ENCODE measurements at regions of chr16 and their contacts with region 1.

Region 1: DNA sequence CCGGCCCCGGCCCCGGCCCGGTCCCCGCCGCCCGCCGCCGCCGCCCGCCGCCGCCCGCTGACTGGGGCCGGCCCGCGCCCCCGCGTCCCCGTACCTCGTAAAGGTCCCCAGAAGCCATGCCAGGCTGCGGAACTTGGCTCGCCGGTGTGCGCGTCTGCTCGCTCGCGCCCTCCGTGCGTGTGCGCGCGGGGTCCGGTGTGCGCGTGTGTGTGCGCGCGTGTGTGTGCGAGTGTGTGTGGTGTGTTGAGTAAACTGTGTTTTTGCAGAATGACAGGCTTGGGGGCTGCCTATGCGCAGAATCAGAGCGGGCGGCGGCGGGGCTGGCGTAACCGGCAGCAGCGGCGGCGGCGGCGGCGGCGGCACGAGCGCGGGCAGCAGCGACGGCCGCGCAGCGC is 345 bp downstream of the CDYL2 start:
- DNase-seq: peak; percentile 75
- H3K4me3 Mint-ChIP-seq: peak overlapping the region; percentile 96
- H3K27ac Mint-ChIP-seq: peak overlapping the region; percentile 89
- H3K4me1 Mint-ChIP-seq: peaks cover 57% of the 10 kb centered on the region
- H3K27me3 Mint-ChIP-seq: peaks cover 2% of the 10 kb centered on the region

Region 2: DNA sequence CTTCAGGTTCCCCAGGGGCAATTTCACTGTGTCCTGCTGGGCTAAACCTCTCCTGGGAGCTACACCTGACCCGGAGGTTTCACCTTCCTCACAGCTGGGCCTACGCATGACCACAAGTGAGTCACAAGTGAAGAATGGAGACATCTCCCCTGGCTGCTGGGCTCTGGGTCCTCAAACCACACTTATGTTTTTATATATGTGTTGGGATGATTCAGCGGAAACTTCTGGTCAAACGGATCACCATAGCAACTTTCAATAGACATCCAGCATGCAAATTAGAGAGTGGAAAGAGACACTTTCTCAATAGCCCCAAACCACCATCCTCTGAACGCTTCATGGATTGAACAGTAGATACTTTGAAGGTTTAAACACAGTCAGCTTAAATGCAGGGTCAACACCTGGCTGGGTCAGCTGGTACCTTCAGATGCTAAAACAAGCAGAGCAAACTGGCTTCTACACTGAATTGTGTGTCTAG is 1175.5 kb before region 1 on chr16:
- CTCF ChIA-PET with region 1: no interaction called
- POLR2A ChIA-PET with region 1: no interaction called
- intact Hi-C with region 1: loop called (anchors 10 kb)
- DNase-seq: peak; percentile 91
- H3K4me3 Mint-ChIP-seq: no peak overlapping the region
- H3K27ac Mint-ChIP-seq: peak overlapping the region; percentile 76
- H3K4me1 Mint-ChIP-seq: peaks cover 41% of the 10 kb centered on the region
- H3K27me3 Mint-ChIP-seq: peaks cover 30% of the 10 kb centered on the region

Region 3: DNA sequence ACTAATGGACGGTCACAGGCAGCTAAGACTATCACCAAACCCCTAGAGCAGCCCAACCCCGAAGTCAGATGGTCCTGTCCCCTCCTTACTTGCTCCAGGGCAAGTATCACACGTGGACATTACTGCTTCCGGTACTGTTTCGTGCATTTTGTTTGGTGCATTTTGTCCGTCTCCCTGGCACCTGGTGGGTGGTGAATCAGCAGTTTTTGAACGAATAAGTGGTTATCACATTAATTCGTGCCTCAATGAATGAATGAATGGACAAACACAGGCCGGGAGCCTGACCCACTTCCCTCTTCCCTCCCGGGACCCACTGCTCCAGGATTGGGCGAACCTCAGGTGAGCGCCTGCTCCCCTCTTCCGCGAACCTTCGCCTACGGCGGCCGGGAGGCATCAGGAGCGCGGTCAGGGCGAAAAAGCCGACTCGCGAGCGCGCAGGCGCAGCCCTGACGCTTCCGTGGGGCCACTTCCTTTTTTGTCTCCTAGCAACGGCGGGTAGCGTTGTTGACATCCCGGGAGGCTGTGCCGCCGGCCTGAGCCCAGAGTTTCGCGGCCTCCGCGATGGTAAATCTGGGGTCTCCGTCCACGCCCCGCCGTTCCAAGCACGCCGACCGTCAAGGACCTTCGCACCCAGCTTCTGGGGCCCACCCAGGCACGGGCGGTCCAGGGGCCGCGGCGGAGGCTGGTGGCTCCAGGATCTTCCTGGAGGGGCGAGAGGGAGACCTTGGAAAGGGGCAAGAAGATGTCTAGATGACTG is 263.4 kb before region 1 on chr16 and contains the start of gene DYNLRB2:
- CTCF ChIA-PET with region 1: no interaction called
- POLR2A ChIA-PET with region 1: no interaction called
- intact Hi-C with region 1: loop called (anchors 1 kb)
- DNase-seq: peak; percentile 96
- H3K4me3 Mint-ChIP-seq: peak within 1 kb of the TSS; percentile 95
- H3K27ac Mint-ChIP-seq: peak within 1 kb of the TSS; percentile 94
- H3K4me1 Mint-ChIP-seq: peaks cover 26% of the 10 kb centered on the region
- H3K27me3 Mint-ChIP-seq: no peaks in the 10 kb centered on the region
- total RNA-seq, gene DYNLRB2: not detected

Region 4: DNA sequence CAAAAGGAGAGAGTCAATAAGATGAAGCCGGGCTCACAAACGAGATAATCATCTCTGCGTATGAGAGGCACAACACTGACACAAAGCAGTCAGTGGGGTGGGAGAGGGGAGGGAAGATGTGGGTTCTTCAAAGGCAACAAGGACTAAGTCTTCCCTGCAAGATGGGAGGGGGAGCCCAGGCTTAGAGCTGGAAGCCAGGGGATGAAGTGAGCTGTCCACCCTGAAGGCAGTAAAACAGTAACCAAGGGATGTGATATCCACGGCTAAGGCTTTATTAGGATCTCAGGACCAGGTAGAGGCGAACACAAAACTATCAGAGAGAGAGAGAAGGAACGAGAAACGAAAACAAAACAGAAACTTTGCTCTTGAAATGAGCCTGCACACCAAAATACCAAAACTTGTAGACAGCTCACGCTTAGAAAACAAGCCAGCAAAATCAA is 147.3 kb before region 1 on chr16:
- CTCF ChIA-PET with region 1: no interaction called
- POLR2A ChIA-PET with region 1: no interaction called
- intact Hi-C with region 1: loop called (anchors 2 kb)
- DNase-seq: peak; percentile 62
- H3K4me3 Mint-ChIP-seq: peak overlapping the region; percentile 73
- H3K27ac Mint-ChIP-seq: peak overlapping the region; percentile 76
- H3K4me1 Mint-ChIP-seq: peaks cover 29% of the 10 kb centered on the region
- H3K27me3 Mint-ChIP-seq: no peaks in the 10 kb centered on the region

Region 5: GRCh38 chr16:80671281-80671849 is 132.7 kb before region 1 on chr16:
- CTCF ChIA-PET with region 1: no interaction called
- POLR2A ChIA-PET with region 1: no interaction called
- intact Hi-C with region 1: no loop called
- DNase-seq: no peak
- H3K4me3 Mint-ChIP-seq: no peak overlapping the region
- H3K27ac Mint-ChIP-seq: no peak overlapping the region
- H3K4me1 Mint-ChIP-seq: peaks cover 35% of the 10 kb centered on the region
- H3K27me3 Mint-ChIP-seq: no peaks in the 10 kb centered on the region

Region 6: GRCh38 chr16:80759419-80760162 is 44.5 kb before region 1 on chr16:
- CTCF ChIA-PET with region 1: no interaction called
- POLR2A ChIA-PET with region 1: interaction called, 3 read pairs
- intact Hi-C with region 1: loop called (anchors 1 kb)
- DNase-seq: no peak
- H3K4me3 Mint-ChIP-seq: peak overlapping the region; percentile 35
- H3K27ac Mint-ChIP-seq: peak overlapping the region; percentile 82
- H3K4me1 Mint-ChIP-seq: peaks cover 21% of the 10 kb centered on the region
- H3K27me3 Mint-ChIP-seq: no peaks in the 10 kb centered on the region

Region 7: DNA sequence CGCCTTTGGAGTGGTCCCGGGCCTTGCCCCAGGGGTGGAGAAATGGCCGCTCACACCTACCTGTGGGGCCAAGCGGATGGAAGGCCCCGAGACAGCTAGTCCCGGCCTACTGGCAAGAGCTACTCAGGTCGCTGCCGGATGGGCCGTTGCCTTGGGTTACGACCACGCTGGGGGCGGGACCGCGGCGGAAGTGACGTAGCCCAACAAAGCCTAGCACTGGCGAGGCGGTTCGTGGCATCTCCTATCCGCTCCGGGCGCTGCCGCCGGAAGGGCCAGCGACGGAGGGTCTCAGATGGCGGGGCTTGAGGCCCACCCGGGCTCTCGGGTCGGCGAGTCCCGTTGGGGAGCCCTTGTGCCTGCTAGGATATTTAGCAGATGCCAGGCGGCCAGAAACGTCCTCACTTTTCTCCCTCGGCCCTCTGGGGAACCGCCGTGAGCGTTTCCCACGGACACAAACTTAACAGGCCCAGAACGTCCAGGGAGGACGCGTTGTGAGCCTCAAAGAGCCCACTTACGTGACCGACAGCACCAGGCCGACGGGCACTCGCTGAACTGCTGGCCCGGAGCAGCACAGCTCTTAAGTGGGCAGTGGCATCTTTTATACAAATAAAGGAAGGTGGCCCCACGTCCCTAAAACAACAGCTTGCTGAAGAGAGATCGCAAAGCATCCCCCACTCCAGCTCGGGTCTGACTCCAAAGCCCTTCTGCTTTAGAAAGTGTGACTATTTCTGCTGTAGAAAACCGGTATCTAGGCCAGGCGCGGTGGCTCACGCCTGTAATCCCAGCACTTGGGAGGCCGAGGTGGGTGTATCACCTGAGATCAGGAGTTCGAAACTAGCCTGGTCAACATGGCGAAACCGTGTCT is 273.3 kb after region 1 on chr16 and contains the start of gene C16orf46:
- CTCF ChIA-PET with region 1: no interaction called
- POLR2A ChIA-PET with region 1: interaction called, 3 read pairs
- intact Hi-C with region 1: loop called (anchors 5 kb)
- DNase-seq: peak; percentile 99
- H3K4me3 Mint-ChIP-seq: peak within 1 kb of the TSS; percentile 32
- H3K27ac Mint-ChIP-seq: no peak within 1 kb of the TSS
- H3K4me1 Mint-ChIP-seq: peaks cover 3% of the 10 kb centered on the region
- H3K27me3 Mint-ChIP-seq: no peaks in the 10 kb centered on the region
- total RNA-seq, gene C16orf46: 0.44 to 0.86 TPM